ENCODE measurements at regions of chr15 and their contacts with region 1.

Region 1: GRCh38 chr15:89874926-89875564 is 18.7 kb downstream of the AP3S2 start:
- DNase-seq: peak; percentile 84
- CTCF ChIP-seq: peak; percentile 93

Region 2: GRCh38 chr15:89740137-89740536 is 134.9 kb before region 1 on chr15:
- CTCF ChIA-PET with region 1: interaction called, 28 read pairs
- POLR2A ChIA-PET with region 1: no interaction called
- DNase-seq: peak; percentile 81
- CTCF ChIP-seq: peak; percentile 79

Region 3: GRCh38 chr15:89760303-89761008 is 114.6 kb before region 1 on chr15:
- CTCF ChIA-PET with region 1: interaction called, 178 read pairs
- POLR2A ChIA-PET with region 1: no interaction called
- DNase-seq: peak; percentile 88
- CTCF ChIP-seq: peak; percentile 100

Region 4: GRCh38 chr15:89799016-89799911 is 75.8 kb before region 1 on chr15:
- CTCF ChIA-PET with region 1: interaction called, 10 read pairs
- POLR2A ChIA-PET with region 1: no interaction called
- DNase-seq: no peak
- CTCF ChIP-seq: no peak

Region 5: DNA sequence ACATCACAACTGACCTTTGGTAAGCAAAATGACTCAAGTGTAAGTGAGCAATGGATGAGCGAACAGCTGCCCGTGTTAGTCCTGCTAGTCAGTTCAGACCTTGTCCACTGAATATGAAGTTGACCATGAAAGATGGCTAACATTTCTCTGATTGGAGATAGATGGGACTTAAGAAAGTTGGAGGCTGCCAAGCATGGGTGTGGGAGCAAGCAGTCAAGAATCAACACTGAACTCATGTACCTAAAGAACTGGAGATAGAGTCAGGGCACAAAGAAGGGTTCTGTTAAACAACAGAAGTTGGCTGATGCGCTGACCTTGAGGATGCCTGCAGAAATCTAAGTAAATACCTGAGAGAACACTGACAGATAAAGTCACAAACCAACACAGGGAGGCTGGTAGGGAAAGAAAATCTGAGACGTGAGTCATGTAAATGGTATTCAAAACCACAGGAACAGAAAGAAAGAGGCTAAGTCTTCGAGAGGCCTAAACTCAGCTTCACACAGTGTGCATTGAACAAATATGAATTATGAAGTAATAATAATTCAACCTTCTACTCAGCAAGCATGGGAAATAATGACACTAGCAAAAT is 29.6 kb before region 1 on chr15:
- CTCF ChIA-PET with region 1: interaction called, 20 read pairs
- POLR2A ChIA-PET with region 1: no interaction called
- DNase-seq: no peak
- CTCF ChIP-seq: no peak

Region 6: DNA sequence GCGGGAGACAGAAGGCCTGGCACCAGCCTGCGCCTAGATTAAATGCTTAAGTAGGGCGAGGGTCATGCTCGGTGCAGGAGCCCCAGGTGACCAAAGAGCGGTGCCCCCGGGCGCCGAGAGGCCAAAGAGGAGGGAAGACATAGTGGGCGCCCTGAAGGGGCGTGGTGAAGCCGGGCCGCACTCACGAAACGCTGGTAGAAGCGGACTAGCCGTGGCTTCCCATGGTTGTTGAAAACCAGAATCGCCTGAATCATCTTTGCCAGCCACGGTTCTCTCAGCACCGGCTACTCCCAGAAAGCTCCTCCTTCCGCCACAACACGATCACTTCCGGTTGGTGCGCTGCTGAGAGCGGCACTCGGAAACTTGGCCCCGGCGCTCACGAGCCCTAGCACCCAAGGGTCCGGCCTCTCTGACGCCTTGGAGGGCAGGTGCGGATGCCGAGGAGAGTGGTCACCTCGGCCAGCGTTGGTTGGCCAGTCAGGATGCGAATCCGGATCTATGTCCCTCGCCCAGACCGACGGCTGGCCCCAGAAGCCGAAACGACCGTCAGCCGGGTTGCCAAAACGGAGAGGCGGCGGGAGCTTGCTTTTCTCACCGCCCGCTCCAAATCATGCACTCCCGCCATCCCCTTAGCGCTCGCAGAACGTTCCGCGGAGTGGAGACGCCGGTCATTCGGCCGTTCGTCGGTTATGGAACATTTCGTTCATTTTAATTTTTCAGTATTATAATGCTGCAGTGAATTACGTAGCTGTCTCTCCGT is 18.8 kb after region 1 on chr15 and contains the start of gene AP3S2:
- CTCF ChIA-PET with region 1: interaction called, 164 read pairs
- POLR2A ChIA-PET with region 1: no interaction called
- DNase-seq: peak; percentile 88
- CTCF ChIP-seq: no peak

Region 7: GRCh38 chr15:90086868-90087268 is 211.8 kb after region 1 on chr15:
- CTCF ChIA-PET with region 1: interaction called, 10 read pairs
- POLR2A ChIA-PET with region 1: no interaction called
- DNase-seq: peak; percentile 71
- CTCF ChIP-seq: peak; percentile 71

Region 8: DNA sequence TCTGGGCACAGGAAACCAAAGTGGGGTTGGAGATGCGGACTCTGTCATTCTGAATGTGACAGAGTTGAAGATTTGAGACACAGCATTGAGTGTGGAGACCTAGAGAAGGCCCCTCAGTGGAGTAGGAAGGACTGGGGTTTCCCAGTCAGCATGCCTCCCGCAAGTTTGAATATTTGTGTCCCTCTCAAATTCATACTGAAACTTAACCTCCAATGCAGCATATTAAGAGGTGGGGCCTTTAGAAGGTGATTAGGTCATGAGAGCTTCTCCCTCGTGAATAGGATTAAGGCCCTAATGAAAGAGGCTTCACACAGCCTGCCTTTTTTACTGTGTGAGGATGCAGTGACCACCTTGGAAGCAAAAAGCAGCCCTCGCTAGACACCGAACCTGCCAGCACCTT is 1049.3 kb after region 1 on chr15:
- CTCF ChIA-PET with region 1: no interaction called
- POLR2A ChIA-PET with region 1: no interaction called
- DNase-seq: peak; percentile 79
- CTCF ChIP-seq: no peak

Measured in GM10248 (cell line).